Activated CD4-positive, alpha-beta memory T cell treated with anti-CD3 and anti-CD28 coated beads, Interleukin-2, amount 10 ng/mL, durations not matched to agents 7 days and 5 days (primary cell): ENCODE measurements at regions of chr2 and their contacts with region 1.

Region 1: DNA sequence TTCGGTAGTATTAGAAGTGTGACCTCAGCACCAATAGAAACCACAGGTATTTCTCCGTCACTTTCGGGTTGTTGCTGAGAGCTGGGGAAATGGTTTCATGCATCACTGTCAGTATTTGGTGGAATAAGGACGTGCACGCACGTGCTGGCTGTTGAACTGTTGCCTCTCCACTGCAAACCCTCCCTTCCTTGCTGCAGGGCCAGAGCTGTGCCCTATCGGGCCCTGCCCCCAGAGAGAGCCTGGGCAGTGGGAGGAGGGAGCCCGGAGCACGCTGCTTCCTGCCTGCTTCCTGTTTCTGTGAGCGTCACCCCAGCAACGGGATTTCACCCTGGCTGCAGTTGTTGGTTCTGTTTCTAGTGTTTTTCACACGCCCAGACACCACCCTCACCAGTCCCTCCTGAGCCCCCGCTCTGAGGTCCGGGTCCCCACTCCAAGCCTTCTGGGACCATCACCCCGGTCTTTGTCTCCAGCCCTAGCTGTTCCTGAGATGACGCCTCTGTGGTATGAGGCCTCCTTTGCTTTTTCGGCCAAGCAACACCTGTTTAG is 47.4 kb downstream of the LRRFIP1 start:
- DNase-seq: peak; percentile 87
- H3K4me3 Mint-ChIP-seq: peak overlapping the region; percentile 81
- H3K27ac Mint-ChIP-seq: peak overlapping the region; percentile 96
- H3K4me1 Mint-ChIP-seq: peaks cover 57% of the 10 kb centered on the region
- H3K27me3 Mint-ChIP-seq: peaks cover 16% of the 10 kb centered on the region

Region 2: DNA sequence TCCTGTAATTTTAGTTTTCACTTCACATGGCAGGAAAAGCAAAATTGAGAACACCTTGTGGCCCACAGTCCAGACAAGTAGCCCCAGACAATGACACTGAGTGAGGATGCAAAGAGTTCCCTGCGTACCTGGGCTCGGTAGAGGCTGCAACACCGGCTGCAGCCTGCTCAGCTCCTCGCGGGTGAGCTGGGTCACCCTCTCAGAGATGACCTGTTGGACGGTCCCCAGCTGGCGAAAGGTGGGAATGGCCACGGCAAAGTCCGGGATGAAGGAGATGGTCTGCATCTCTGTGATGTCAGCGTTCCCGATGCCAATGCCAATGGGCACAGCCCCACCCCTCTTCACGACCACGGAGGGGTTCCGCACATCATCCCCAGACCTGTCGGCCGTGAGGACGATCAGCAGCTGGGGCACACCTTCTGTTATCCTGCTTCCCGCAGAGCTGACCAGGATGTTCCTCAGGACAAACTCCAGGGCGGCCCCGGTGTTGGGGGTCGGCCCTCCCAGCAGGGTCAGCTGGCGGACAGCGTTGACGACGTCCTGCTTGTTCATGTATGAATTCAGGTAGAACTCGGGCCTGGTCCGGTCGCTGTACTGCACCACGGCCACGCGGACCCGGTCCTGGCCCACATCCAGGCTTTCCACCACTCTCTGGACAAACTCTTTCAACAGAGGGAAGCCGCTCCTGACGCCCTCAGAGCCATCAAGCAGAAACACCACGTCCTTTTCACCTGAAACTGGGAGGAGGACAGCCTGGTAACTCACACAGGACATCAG is 300.3 kb before region 1 on chr2:
- CTCF ChIA-PET with region 1: no interaction called
- POLR2A ChIA-PET with region 1: no interaction called
- DNase-seq: no peak
- H3K4me3 Mint-ChIP-seq: no peak overlapping the region
- H3K27ac Mint-ChIP-seq: no peak overlapping the region
- H3K4me1 Mint-ChIP-seq: no peaks in the 10 kb centered on the region
- H3K27me3 Mint-ChIP-seq: no peaks in the 10 kb centered on the region

Region 3: GRCh38 chr2:237685408-237685807 is 10.6 kb after region 1 on chr2:
- CTCF ChIA-PET with region 1: interaction called, 240 read pairs
- POLR2A ChIA-PET with region 1: interaction called, 385 read pairs
- DNase-seq: no peak
- H3K4me3 Mint-ChIP-seq: no peak overlapping the region
- H3K27ac Mint-ChIP-seq: no peak overlapping the region
- H3K4me1 Mint-ChIP-seq: peaks cover 48% of the 10 kb centered on the region
- H3K27me3 Mint-ChIP-seq: no peaks in the 10 kb centered on the region

Region 4: DNA sequence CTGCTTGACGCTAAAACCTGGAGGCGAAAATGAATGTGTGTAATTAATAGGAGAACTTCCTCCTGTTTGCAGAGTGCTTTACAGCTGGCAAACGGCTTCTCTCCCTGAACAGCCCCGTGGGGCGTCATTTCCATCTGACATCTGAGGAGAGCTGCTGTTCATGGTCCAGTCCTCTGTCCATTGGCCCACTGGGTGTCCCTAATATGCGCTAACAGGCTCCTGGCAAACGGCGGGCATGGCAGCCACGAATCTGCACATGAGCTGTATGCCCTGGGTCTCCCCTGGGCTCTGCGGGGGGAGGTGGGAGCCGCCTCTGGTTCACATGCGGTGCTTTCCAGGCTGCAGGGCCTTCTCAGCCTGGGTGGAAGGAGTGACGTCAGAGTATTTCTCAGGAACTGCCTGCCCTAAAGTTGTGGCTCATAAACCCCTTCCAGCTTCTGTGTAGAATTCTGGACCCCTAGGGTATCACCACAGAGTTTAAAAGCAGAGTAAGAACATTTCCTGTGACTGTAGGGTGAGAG is 25.8 kb after region 1 on chr2:
- CTCF ChIA-PET with region 1: interaction called, 240 read pairs
- POLR2A ChIA-PET with region 1: interaction called, 385 read pairs
- DNase-seq: peak; percentile 70
- H3K4me3 Mint-ChIP-seq: peak overlapping the region; percentile 45
- H3K27ac Mint-ChIP-seq: peak overlapping the region; percentile 88
- H3K4me1 Mint-ChIP-seq: peaks cover 96% of the 10 kb centered on the region
- H3K27me3 Mint-ChIP-seq: no peaks in the 10 kb centered on the region

Region 5: DNA sequence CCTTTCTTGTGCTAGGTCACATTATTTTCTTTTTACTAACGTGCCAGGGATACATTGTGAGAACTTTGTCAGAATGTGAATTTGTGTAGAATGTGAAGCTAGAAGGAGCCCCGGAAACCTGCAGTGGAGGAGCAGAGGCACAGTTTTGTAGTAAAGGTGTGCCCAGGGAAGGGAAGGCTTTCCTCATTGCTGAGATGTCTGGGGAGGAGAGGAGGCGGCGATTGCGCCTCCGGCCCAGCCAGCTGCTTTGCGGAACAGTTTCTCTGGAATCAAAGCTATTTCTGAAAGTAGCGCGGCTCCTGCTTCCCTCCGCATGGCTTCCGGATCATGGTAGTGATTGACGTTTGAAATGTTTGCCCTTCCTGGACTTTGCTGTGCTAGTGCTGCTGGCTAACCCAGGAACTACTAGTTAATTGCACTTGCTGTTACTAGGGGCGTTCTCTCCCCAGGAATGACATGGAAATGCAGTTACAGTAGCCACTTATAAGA is 40.7 kb after region 1 on chr2:
- CTCF ChIA-PET with region 1: interaction called, 12 read pairs
- POLR2A ChIA-PET with region 1: interaction called, 7 read pairs
- DNase-seq: no peak
- H3K4me3 Mint-ChIP-seq: no peak overlapping the region
- H3K27ac Mint-ChIP-seq: no peak overlapping the region
- H3K4me1 Mint-ChIP-seq: peaks cover 37% of the 10 kb centered on the region
- H3K27me3 Mint-ChIP-seq: no peaks in the 10 kb centered on the region

Region 6: DNA sequence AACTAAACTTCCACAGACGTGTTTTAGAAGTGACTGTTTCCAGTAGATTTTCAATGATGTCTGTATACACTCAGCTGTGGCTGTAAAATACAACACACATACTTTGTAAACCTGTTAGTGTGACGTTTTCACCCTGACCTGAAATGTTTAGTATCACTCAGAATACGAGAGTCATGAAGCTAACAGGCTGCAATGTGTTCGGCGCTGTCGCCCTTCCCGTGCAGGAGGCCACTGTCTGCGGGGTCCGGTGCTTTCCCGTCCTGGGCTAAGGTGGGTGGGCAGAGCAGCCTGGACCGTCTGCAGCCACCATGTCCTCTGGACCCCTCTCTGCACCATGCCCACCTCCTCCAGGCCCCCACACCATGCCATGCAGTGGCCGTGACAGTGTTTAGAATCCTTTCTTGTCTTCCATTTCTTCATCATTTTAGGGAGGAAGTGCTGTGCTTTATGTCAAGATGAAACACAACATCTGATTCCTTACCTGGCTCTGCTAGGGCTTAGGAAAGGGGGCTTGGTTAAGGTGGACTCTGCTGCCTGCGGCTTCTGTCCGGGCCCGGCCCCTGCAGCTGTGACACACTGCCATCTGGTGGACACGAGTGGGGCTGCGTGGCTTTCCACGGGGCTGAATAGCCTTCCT is 69.9 kb after region 1 on chr2:
- CTCF ChIA-PET with region 1: interaction called, 101 read pairs
- POLR2A ChIA-PET with region 1: interaction called, 8 read pairs
- DNase-seq: peak; percentile 75
- H3K4me3 Mint-ChIP-seq: no peak overlapping the region
- H3K27ac Mint-ChIP-seq: peak overlapping the region; percentile 64
- H3K4me1 Mint-ChIP-seq: peaks cover 29% of the 10 kb centered on the region
- H3K27me3 Mint-ChIP-seq: no peaks in the 10 kb centered on the region